ENCODE measurements at regions of chr3 and their contacts with region 1.

Region 1: GRCh38 chr3:113531826-113532697 is at the start of gene SIDT1:
- DNase-seq: peak; percentile 52 to 83 (median 76)
- H3K4me3 ChIP-seq: peak within 1 kb of the TSS; percentile 94
- H3K4me3 Mint-ChIP-seq: peak within 1 kb of the TSS; percentile 96 to 100 (median 99)
- H3K27ac ChIP-seq: peak within 1 kb of the TSS; percentile 93
- H3K27ac Mint-ChIP-seq: peak within 1 kb of the TSS; percentile 97 to 100 (median 100)
- H3K4me1 ChIP-seq: peaks cover 42% of the 10 kb centered on the region
- H3K4me1 Mint-ChIP-seq: peaks cover 49 to 53% (median 49%) of the 10 kb centered on the region in 3 donors
- H3K27me3 ChIP-seq: no peaks in the 10 kb centered on the region
- H3K27me3 Mint-ChIP-seq: no peaks in the 10 kb centered on the region
- total RNA-seq, gene SIDT1: 14.8 to 16.6 TPM

Region 2: GRCh38 chr3:113441051-113441770 is 90.9 kb before region 1 on chr3 and contains the start of gene CFAP44:
- CTCF ChIA-PET with region 1: no interaction called
- POLR2A ChIA-PET with region 1: no interaction called
- DNase-seq: peak in 4 of 5 donors; percentile 39 to 79 (median 52)
- H3K4me3 ChIP-seq: no peak within 1 kb of the TSS
- H3K4me3 Mint-ChIP-seq: peak within 1 kb of the TSS in 4 of 7 donors; percentile 35 to 57 (median 46)
- H3K27ac ChIP-seq: no peak within 1 kb of the TSS
- H3K27ac Mint-ChIP-seq: peak within 1 kb of the TSS in 1 of 8 donors; percentile 26
- H3K4me1 ChIP-seq: no peaks in the 10 kb centered on the region
- H3K4me1 Mint-ChIP-seq: no peaks in the 10 kb centered on the region
- H3K27me3 ChIP-seq: no peaks in the 10 kb centered on the region
- H3K27me3 Mint-ChIP-seq: no peaks in the 10 kb centered on the region
- total RNA-seq, gene CFAP44: 3.9 to 5.3 TPM

Region 3: DNA sequence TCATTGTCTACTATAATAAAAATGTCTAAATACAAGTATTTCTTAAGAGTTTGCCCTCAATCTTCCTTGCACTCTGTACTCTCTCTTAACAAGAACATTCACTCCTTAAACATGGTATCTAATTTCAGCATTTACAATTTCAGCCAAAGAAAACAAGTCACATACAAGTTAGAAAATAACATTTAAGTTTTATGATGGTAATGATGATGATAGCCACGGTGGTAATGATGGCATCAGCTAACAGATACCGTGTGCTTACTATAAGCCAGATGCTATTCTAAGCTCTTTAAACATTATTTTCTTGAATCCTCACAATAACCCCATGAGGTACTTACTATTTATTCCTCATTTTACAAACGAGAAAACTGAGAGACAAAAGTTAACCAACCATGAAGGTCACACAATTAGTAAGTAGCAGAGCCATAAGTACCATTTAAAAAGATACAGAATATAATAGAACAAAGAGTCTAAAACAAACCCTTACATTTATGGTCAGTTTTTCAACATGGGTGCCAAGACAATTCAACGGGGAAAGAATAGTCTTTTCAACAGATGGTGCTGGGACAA is 24.5 kb before region 1 on chr3:
- CTCF ChIA-PET with region 1: no interaction called
- POLR2A ChIA-PET with region 1: no interaction called
- DNase-seq: no peak
- H3K4me3 ChIP-seq: no peak overlapping the region
- H3K4me3 Mint-ChIP-seq: no peak overlapping the region
- H3K27ac ChIP-seq: no peak overlapping the region
- H3K27ac Mint-ChIP-seq: peak overlapping the region in 1 of 8 donors; percentile 17
- H3K4me1 ChIP-seq: no peaks in the 10 kb centered on the region
- H3K4me1 Mint-ChIP-seq: peaks cover 2 to 10% (median 3%) of the 10 kb centered on the region in 3 donors
- H3K27me3 ChIP-seq: no peaks in the 10 kb centered on the region
- H3K27me3 Mint-ChIP-seq: no peaks in the 10 kb centered on the region

Region 4: GRCh38 chr3:113555138-113555537 is 23.1 kb after region 1 on chr3:
- CTCF ChIA-PET with region 1: interaction called, 3 read pairs
- POLR2A ChIA-PET with region 1: interaction called, 16 read pairs
- DNase-seq: no peak
- H3K4me3 ChIP-seq: no peak overlapping the region
- H3K4me3 Mint-ChIP-seq: no peak overlapping the region
- H3K27ac ChIP-seq: no peak overlapping the region
- H3K27ac Mint-ChIP-seq: peak overlapping the region in 1 of 8 donors; percentile 4
- H3K4me1 ChIP-seq: peaks cover 13% of the 10 kb centered on the region
- H3K4me1 Mint-ChIP-seq: peaks cover 42 to 82% (median 73%) of the 10 kb centered on the region in 3 donors
- H3K27me3 ChIP-seq: no peaks in the 10 kb centered on the region
- H3K27me3 Mint-ChIP-seq: no peaks in the 10 kb centered on the region

Region 5: GRCh38 chr3:113560831-113561623 is 29.0 kb after region 1 on chr3:
- CTCF ChIA-PET with region 1: interaction called, 3 read pairs
- POLR2A ChIA-PET with region 1: interaction called, 13 read pairs
- DNase-seq: peak in 2 of 5 donors; percentile 16 to 32
- H3K4me3 ChIP-seq: no peak overlapping the region
- H3K4me3 Mint-ChIP-seq: peak overlapping the region in 2 of 7 donors; percentile 16 to 37
- H3K27ac ChIP-seq: no peak overlapping the region
- H3K27ac Mint-ChIP-seq: peak overlapping the region; percentile 32 to 90 (median 82)
- H3K4me1 ChIP-seq: peaks cover 33% of the 10 kb centered on the region
- H3K4me1 Mint-ChIP-seq: peaks cover 56 to 84% (median 84%) of the 10 kb centered on the region in 3 donors
- H3K27me3 ChIP-seq: no peaks in the 10 kb centered on the region
- H3K27me3 Mint-ChIP-seq: no peaks in the 10 kb centered on the region

Measured in CD8-positive, alpha-beta memory T cell (primary cell).